T-cell (primary cell): ENCODE measurements at regions of chr9 and their contacts with region 1.

Region 1: DNA sequence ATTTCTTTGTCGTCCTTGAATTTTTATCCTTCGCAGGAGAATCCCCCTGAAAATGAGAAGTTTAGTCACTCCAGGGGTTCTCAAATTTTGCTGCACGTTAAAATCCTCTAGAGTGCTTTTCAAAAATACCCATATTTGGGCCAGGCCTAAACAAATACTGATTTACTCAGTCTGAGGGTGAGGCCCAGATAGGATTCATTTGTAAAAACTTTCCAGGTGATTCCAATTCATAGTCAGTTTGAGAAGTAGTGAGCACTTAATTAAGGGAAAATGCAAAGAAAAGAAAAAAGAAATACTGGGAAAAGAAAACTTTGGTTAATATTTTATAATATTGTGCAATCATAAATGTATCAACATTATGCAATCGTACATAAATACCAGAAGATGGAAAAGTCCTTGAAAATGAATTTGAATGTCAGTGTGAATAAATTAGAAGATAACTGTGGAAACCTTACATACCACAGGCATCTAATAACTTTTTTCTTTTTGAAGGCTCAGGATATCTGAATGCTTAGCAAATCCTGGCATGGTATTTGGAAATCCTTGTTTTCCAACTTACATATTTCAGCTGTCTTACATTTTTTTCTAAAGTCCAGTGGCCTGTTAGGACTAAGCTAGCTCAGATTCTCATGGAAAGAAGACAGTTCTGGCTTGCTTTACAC is 116.5 kb upstream of the DAPK1 start:
- DNase-seq: no peak
- ATAC-seq: no peak
- H3K4me3 ChIP-seq: no peak overlapping the region
- H3K4me3 Mint-ChIP-seq: no peak overlapping the region
- H3K27ac ChIP-seq: no peak overlapping the region
- H3K27ac Mint-ChIP-seq: no peak overlapping the region
- H3K4me1 ChIP-seq: no peaks in the 10 kb centered on the region
- H3K4me1 Mint-ChIP-seq: no peaks in the 10 kb centered on the region
- H3K27me3 ChIP-seq: peaks cover 0 to 2% of the 10 kb centered on the region in 2 experiments
- H3K27me3 Mint-ChIP-seq: peaks cover 5 to 6% of the 10 kb centered on the region in 2 donors

Region 2: DNA sequence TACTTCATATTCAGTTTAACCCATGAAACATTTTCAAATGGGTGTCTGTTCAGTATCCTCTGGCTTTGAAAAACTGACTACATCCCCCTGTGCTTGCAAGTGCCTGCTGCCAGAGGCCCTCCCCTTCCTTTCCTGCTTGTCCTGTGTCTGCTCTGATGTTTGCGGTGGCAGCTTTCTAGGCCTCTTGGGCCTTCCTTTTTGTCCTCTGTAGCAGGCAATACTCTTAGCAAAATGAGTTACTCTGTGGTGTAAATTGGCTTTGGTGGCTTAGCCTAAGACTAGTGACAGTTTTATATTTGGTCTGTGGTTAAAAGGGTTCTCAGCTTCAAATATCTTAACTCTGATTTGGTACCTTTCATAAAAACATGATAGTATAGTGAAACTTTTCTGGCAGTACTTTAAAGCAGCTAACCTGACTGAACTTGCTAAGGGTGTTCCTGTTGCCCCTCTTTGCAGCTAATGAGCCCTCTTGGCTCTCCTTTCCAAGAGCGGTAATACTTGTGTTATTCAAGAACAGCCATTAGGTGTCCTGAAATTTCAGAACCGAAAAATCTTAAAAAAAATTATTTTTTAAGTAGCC is 1358.4 kb before region 1 on chr9:
- CTCF ChIA-PET with region 1: no interaction called
- POLR2A ChIA-PET with region 1: no interaction called
- DNase-seq: peak in 6 of 35 experiments; percentile 7 to 33 (median 13)
- ATAC-seq: peak; percentile 57 to 78 (median 65)
- H3K4me3 ChIP-seq: no peak overlapping the region
- H3K4me3 Mint-ChIP-seq: no peak overlapping the region
- H3K27ac ChIP-seq: no peak overlapping the region
- H3K27ac Mint-ChIP-seq: peak overlapping the region; percentile 47 to 57
- H3K4me1 ChIP-seq: peaks cover 3 to 10% of the 10 kb centered on the region in 2 experiments
- H3K4me1 Mint-ChIP-seq: peaks cover 21 to 24% (median 23%) of the 10 kb centered on the region in 3 donors
- H3K27me3 ChIP-seq: no peaks in the 10 kb centered on the region
- H3K27me3 Mint-ChIP-seq: no peaks in the 10 kb centered on the region

Region 3: DNA sequence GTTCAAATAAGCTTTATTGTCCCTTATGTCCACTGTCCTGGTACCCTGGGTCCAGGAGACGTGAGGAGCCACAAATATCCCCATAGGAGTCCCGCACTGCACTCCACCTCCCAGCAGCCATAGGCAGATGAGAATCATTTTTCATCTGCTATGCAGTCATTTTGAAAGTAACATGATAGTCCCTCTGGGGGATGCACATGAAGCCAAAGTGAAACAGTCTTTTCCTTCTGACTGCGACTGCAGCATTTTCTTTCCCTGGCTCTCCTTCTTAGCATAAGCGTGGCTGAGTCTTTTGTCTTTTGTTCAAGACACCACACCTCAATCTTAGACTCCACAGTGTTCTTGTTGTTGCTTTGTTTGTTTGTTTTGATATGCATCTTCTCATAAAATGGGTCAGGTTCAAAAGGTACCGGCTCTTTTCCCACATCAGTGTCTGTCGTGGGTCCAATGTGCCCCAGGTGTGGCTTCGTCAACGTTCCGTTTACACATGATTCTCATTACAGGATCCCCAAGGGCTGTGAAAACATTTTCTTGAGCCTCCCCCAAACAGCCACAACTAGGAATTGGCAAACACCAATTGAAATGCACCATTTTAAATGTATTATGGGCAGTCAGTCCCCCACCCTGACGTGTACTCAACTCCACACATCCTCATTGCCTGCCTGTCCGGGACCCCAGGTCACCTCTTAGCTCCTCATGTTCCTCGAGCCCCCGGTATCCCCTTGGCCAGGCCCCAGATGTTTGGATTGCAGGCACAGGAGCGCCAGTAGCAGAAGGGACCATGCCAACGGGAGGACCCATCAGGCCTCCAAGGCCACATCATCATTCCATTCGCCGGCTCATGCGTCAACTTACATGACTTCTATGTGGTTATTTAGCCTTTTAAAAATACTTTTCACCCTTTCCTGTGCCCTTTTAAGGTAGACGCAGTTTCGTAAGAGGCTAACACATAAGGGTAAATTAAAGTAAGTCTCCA is 121.3 kb before region 1 on chr9:
- CTCF ChIA-PET with region 1: no interaction called
- POLR2A ChIA-PET with region 1: no interaction called
- DNase-seq: no peak
- ATAC-seq: no peak
- H3K4me3 ChIP-seq: no peak overlapping the region
- H3K4me3 Mint-ChIP-seq: no peak overlapping the region
- H3K27ac ChIP-seq: no peak overlapping the region
- H3K27ac Mint-ChIP-seq: no peak overlapping the region
- H3K4me1 ChIP-seq: no peaks in the 10 kb centered on the region
- H3K4me1 Mint-ChIP-seq: no peaks in the 10 kb centered on the region
- H3K27me3 ChIP-seq: no peaks in the 10 kb centered on the region
- H3K27me3 Mint-ChIP-seq: peaks cover 0 to 3% of the 10 kb centered on the region in 2 donors

Region 4: DNA sequence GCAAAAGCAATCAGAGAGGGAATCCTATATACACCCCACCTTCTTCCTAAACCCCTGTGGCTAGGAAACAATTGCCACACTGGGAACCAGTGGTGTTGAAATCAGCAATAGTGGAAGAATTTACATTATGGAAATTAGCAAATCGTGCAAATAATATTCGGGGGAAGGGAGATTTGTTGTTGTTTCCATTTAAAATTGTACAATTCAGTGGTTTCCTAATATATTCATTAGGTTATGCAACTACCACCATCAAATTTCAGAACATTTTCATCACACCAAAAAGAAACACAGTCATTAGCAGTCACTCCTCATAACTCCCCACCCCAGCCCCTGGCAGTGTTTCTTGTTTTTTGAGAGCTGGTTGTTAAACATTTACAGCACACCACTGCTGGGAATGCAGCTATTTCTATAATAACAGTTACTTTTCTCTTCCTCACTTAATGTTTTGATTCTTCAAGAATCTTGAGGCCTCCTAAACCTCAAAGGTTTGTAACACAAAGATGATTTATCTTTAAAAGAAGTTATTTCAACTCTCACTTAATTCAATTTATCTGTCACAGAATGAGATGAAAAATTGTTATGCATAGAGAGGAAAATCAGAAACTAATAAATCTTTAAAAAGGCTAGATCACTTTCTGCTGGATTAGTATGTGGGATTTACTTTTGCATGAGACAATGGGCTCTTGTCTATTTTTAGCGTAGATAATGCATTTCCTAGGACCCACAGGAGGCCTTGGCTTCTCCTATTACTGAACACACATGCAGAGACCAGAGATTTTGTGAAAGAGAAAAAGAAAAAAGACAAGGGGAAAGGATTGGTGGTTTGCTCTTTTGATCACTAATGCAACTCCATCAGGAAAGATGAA is 24.7 kb after region 1 on chr9:
- CTCF ChIA-PET with region 1: interaction called in 1 of 2 experiments, 11 read pairs
- POLR2A ChIA-PET with region 1: no interaction called
- DNase-seq: no peak
- ATAC-seq: no peak
- H3K4me3 ChIP-seq: no peak overlapping the region
- H3K4me3 Mint-ChIP-seq: no peak overlapping the region
- H3K27ac ChIP-seq: no peak overlapping the region
- H3K27ac Mint-ChIP-seq: no peak overlapping the region
- H3K4me1 ChIP-seq: no peaks in the 10 kb centered on the region
- H3K4me1 Mint-ChIP-seq: no peaks in the 10 kb centered on the region
- H3K27me3 ChIP-seq: peaks cover 0 to 5% of the 10 kb centered on the region in 2 experiments
- H3K27me3 Mint-ChIP-seq: peaks cover 0 to 2% of the 10 kb centered on the region in 2 donors

Region 5: GRCh38 chr9:87620731-87621322 is 239.6 kb after region 1 on chr9:
- CTCF ChIA-PET with region 1: no interaction called
- POLR2A ChIA-PET with region 1: no interaction called
- DNase-seq: no peak
- ATAC-seq: no peak
- H3K4me3 ChIP-seq: no peak overlapping the region
- H3K4me3 Mint-ChIP-seq: no peak overlapping the region
- H3K27ac ChIP-seq: no peak overlapping the region
- H3K27ac Mint-ChIP-seq: no peak overlapping the region
- H3K4me1 ChIP-seq: no peaks in the 10 kb centered on the region
- H3K4me1 Mint-ChIP-seq: no peaks in the 10 kb centered on the region
- H3K27me3 ChIP-seq: peaks cover 0 to under 1% of the 10 kb centered on the region in 2 experiments
- H3K27me3 Mint-ChIP-seq: peaks cover 4 to 8% of the 10 kb centered on the region in 2 donors